ENCODE measurements at regions of chr6 and their contacts with region 1.

Region 1: GRCh38 chr6:138795809-138796603 is at the start of gene ECT2L:
- DNase-seq: peak; percentile 40
- H3K4me3 ChIP-seq: peak within 1 kb of the TSS in 2 of 3 experiments; percentile 1 to 28
- H3K27ac ChIP-seq: no peak within 1 kb of the TSS
- H3K4me1 ChIP-seq: peaks cover 3% of the 10 kb centered on the region
- H3K27me3 ChIP-seq: no peaks in the 10 kb centered on the region
- CTCF ChIP-seq: no peak
- total RNA-seq, gene ECT2L: under 0.01 TPM in 1 of 2 donors, not detected in the other

Region 2: DNA sequence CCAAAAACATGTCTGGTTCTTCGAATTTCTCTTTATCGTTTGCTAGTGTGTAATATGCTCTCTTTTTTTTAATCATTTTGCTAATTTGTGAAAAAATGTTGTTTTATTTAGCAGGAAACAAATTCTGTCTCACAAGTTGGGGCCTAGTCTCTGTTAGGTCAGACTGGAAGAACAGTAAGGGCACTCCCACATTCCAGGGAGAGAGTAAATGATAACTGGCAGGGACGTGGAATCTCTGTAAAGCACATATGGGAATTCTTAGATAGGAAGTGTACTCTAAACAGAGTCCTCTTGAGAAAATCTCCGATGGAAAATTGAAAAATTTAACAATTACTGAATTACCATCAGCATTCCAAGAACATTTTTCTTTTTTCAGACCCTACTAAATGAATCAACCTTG is 38.9 kb before region 1 on chr6:
- CTCF ChIA-PET with region 1: no interaction called
- dilution Hi-C with region 1: no loop called
- in situ Hi-C with region 1: no loop called
- intact Hi-C with region 1: no loop called
- DNase-seq: no peak
- H3K4me3 ChIP-seq: no peak overlapping the region
- H3K27ac ChIP-seq: no peak overlapping the region
- H3K4me1 ChIP-seq: no peaks in the 10 kb centered on the region
- H3K27me3 ChIP-seq: no peaks in the 10 kb centered on the region
- CTCF ChIP-seq: no peak

Region 3: DNA sequence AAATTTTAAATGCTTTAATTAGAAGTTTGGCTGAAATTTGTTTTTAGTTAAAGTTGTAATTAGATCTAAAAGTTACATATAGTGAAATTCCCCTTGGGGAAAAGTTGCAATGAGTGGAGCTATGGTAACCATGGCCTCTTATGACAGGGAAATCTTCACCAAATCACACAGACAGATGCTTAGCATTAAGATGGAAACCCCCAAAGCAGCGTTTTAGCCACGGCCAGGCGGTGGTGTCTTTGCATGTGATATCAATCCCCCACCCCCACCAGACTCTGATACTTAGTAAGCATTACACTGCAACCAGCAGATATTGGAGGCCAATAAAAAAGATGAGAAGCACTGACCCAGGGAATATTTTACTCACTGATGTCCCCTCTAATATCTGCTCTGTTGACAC is 116.3 kb after region 1 on chr6:
- CTCF ChIA-PET with region 1: no interaction called
- dilution Hi-C with region 1: no loop called
- in situ Hi-C with region 1: no loop called
- intact Hi-C with region 1: no loop called
- DNase-seq: no peak
- H3K4me3 ChIP-seq: no peak overlapping the region
- H3K27ac ChIP-seq: no peak overlapping the region
- H3K4me1 ChIP-seq: peaks cover 17% of the 10 kb centered on the region
- H3K27me3 ChIP-seq: no peaks in the 10 kb centered on the region
- CTCF ChIP-seq: no peak

Region 4: DNA sequence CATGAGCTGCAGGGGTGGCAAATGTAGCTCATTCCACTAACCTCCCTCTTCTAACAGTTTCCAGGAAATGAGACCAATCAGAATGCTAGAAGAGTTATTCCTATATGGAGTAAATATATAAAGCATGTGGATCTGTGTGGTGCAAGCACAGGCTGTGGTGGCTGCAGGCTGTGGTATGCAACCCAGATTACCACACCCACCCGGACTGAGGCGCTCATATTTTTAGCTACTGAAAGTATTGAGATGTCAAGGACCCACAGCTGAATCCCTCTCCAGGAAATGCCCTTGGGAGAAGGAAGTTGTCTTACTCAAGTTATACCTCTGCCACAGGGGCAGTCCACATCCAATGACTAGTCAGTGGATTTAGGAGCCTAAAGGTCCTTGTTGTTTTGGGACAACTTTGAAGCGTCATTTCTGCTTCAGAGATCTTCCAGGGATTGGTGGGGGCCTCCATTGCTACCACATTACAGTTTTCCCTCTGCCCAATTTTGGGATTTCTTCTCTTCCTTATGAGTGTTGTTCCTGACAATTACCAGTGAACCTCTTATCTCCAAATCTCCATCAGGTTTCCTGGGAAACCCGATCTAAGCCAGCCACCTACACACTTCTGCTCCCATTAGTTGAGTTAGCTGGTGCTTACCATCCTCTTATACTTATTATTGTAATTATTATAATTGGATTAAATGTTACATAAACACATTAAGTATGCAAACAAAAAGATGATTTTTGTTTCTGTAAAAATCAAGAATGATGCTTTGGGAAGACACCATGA is 204.1 kb after region 1 on chr6:
- CTCF ChIA-PET with region 1: no interaction called
- dilution Hi-C with region 1: no loop called
- in situ Hi-C with region 1: loop called in 1 of 2 experiments (anchors 10 kb)
- intact Hi-C with region 1: no loop called
- DNase-seq: no peak
- H3K4me3 ChIP-seq: no peak overlapping the region
- H3K27ac ChIP-seq: no peak overlapping the region
- H3K4me1 ChIP-seq: no peaks in the 10 kb centered on the region
- H3K27me3 ChIP-seq: no peaks in the 10 kb centered on the region
- CTCF ChIP-seq: no peak

Region 5: DNA sequence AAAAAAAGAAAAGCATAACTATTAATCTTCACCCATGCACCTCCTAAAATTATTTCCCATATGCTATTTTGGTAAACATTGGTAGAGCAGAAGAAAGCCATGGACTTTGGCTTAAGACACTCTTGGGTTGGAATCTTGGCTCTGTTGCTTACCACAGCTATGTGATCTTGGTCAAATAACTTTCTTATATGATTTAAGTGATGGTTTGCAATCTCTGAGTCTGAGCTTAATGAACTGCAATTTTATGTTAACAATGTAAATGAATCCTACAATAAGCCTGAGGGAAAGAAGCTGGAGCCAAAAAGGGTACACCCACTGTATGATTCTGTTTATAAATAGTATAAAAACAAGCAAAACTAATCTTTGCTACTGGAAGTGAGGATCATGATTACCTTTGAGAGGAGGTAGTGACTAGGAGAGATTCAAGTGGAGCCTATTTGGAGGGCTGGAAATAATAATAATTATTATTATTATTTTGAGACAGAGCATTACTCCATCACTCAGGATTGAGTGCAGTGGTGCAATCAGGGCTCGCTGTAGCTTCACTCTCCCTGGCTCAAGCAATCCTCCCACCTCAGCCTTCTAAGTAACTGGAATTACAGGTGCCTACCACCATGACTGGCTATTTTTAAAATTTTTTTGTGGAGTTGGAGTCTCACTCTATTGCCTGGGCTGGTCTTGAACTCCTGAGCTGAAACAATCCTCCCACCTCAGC is 267.1 kb after region 1 on chr6:
- CTCF ChIA-PET with region 1: interaction called, 14 read pairs
- dilution Hi-C with region 1: no loop called
- in situ Hi-C with region 1: no loop called
- intact Hi-C with region 1: no loop called
- DNase-seq: no peak
- H3K4me3 ChIP-seq: no peak overlapping the region
- H3K27ac ChIP-seq: no peak overlapping the region
- H3K4me1 ChIP-seq: peaks cover 8% of the 10 kb centered on the region
- H3K27me3 ChIP-seq: no peaks in the 10 kb centered on the region
- CTCF ChIP-seq: no peak

Region 6: DNA sequence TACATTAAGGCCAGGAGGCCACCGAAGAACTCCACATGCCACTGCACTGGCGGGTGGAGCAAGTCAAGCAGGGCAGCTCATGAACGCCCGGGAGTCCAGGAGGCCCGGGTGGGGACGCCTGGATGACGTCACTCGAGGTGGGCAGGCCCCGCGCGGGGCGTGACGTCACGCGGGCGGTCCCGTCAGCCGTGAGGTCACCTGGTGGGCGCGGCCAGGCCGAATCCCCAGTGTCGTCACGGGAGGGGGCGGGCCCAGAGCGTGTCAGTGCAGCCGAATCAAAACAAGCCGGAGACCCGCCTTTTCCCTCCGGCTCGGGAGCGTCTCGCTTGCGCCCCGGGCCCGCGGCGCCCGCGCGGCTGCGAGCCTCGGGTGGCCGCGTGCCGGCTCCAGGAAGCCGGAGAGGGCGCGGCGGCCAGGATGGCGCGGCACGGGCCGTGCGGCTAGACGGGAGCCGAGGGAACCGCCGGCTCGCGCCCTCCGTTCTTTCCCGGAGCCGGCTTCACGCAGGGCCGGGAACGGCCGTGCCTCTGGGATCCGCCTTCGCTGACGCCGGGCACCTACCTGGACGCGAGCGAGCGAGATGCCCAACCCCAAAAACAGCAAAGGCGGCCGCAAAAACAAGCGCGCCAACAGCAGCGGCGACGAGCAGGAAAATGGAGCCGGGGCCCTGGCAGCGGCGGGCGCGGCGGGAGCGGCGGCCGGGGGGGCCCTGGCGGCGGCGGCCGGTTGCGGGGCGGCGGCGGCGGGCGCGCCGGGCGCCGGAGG is 339.0 kb after region 1 on chr6 and contains the start of gene HECA:
- CTCF ChIA-PET with region 1: no interaction called
- dilution Hi-C with region 1: no loop called
- in situ Hi-C with region 1: no loop called
- intact Hi-C with region 1: no loop called
- DNase-seq: peak; percentile 89
- H3K4me3 ChIP-seq: peak within 1 kb of the TSS; percentile 79 to 93 (median 89)
- H3K27ac ChIP-seq: peak within 1 kb of the TSS; percentile 78
- H3K4me1 ChIP-seq: no peaks in the 10 kb centered on the region
- H3K27me3 ChIP-seq: no peaks in the 10 kb centered on the region
- CTCF ChIP-seq: no peak
- total RNA-seq, gene HECA: 15.0 to 23.8 TPM

Region 7: GRCh38 chr6:139262519-139263300 is 466.7 kb after region 1 on chr6:
- CTCF ChIA-PET with region 1: no interaction called
- dilution Hi-C with region 1: no loop called
- in situ Hi-C with region 1: no loop called
- intact Hi-C with region 1: no loop called
- DNase-seq: peak; percentile 58
- H3K4me3 ChIP-seq: no peak overlapping the region
- H3K27ac ChIP-seq: no peak overlapping the region
- H3K4me1 ChIP-seq: no peaks in the 10 kb centered on the region
- H3K27me3 ChIP-seq: no peaks in the 10 kb centered on the region
- CTCF ChIP-seq: no peak